Naive thymus-derived CD4-positive, alpha-beta T cell (primary cell): ENCODE measurements at regions of chr2 and their contacts with region 1.

Region 1: GRCh38 chr2:222290736-222291484 is 7.9 kb downstream of the PAX3 start:
- DNase-seq: no peak
- ATAC-seq: no peak
- H3K4me3 ChIP-seq: no peak overlapping the region
- H3K4me3 Mint-ChIP-seq: no peak overlapping the region
- H3K27ac ChIP-seq: no peak overlapping the region
- H3K27ac Mint-ChIP-seq: no peak overlapping the region
- H3K4me1 ChIP-seq: peaks cover 0 to 1% of the 10 kb centered on the region in 2 donors
- H3K4me1 Mint-ChIP-seq: peaks cover 5 to 22% (median 12%) of the 10 kb centered on the region in 7 donors
- H3K27me3 ChIP-seq: peaks cover 0 to 13% of the 10 kb centered on the region in 2 donors
- H3K27me3 Mint-ChIP-seq: peaks cover 78 to 95% (median 92%) of the 10 kb centered on the region in 5 donors

Region 2: GRCh38 chr2:222087987-222088960 is 202.6 kb before region 1 on chr2:
- CTCF ChIA-PET with region 1: no interaction called
- POLR2A ChIA-PET with region 1: no interaction called
- intact Hi-C with region 1: no loop called
- DNase-seq: no peak
- ATAC-seq: no peak
- H3K4me3 ChIP-seq: no peak overlapping the region
- H3K4me3 Mint-ChIP-seq: no peak overlapping the region
- H3K27ac ChIP-seq: no peak overlapping the region
- H3K27ac Mint-ChIP-seq: peak overlapping the region in 1 of 9 donors; percentile 72
- H3K4me1 ChIP-seq: no peaks in the 10 kb centered on the region
- H3K4me1 Mint-ChIP-seq: no peaks in the 10 kb centered on the region
- H3K27me3 ChIP-seq: no peaks in the 10 kb centered on the region
- H3K27me3 Mint-ChIP-seq: peaks cover 0 to 7% (median 0%) of the 10 kb centered on the region in 5 donors

Region 3: GRCh38 chr2:222272446-222273015 is 18.4 kb before region 1 on chr2:
- CTCF ChIA-PET with region 1: no interaction called
- POLR2A ChIA-PET with region 1: no interaction called
- intact Hi-C with region 1: no loop called
- DNase-seq: no peak
- ATAC-seq: no peak
- H3K4me3 ChIP-seq: no peak overlapping the region
- H3K4me3 Mint-ChIP-seq: no peak overlapping the region
- H3K27ac ChIP-seq: no peak overlapping the region
- H3K27ac Mint-ChIP-seq: no peak overlapping the region
- H3K4me1 ChIP-seq: no peaks in the 10 kb centered on the region
- H3K4me1 Mint-ChIP-seq: no peaks in the 10 kb centered on the region
- H3K27me3 ChIP-seq: no peaks in the 10 kb centered on the region
- H3K27me3 Mint-ChIP-seq: peaks cover 0 to 31% (median 17%) of the 10 kb centered on the region in 5 donors

Region 4: GRCh38 chr2:222305516-222306392 is 14.8 kb after region 1 on chr2:
- CTCF ChIA-PET with region 1: no interaction called
- POLR2A ChIA-PET with region 1: no interaction called
- intact Hi-C with region 1: loop called in 1 of 2 experiments (anchors 2 kb)
- DNase-seq: no peak
- ATAC-seq: no peak
- H3K4me3 ChIP-seq: peak overlapping the region; percentile 43
- H3K4me3 Mint-ChIP-seq: peak overlapping the region; percentile 50 to 88 (median 78)
- H3K27ac ChIP-seq: no peak overlapping the region
- H3K27ac Mint-ChIP-seq: peak overlapping the region in 1 of 9 donors; percentile 85
- H3K4me1 ChIP-seq: peaks cover 0 to 12% of the 10 kb centered on the region in 2 donors
- H3K4me1 Mint-ChIP-seq: peaks cover 30 to 46% (median 37%) of the 10 kb centered on the region in 7 donors
- H3K27me3 ChIP-seq: peaks cover 11 to 35% of the 10 kb centered on the region in 2 donors
- H3K27me3 Mint-ChIP-seq: peaks cover 90 to 99% (median 92%) of the 10 kb centered on the region in 5 donors